H1 (cell line): ENCODE measurements at regions of chrX and their contacts with region 1.

Region 1: DNA sequence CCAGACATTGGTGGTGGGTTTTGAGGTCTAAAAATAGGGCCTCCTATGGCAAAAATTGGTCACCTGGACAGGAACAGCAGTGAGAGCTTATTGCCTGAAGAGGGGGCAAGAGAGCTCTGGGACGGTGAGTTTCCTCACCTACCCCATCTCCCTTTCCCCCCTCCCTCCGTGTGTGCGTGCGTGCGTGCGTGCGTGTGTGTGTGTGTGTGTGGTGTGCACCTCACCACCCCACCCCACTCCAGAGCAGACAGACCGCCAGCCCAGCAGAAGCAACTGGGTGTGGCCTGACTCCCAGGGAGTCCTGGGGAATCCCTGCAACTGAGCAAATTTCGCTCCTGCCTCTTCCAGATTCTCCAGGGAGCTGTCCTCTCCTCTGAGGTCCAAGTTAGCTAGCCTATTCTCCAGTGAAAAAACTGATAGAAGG is 44.7 kb downstream of the PRPS1 start:
- DNase-seq: peak in 1 of 2 experiments; percentile 56
- H3K4me3 ChIP-seq: 0 out of 8 replicates have a peak overlapping the region, but pooled peaks of 1 of the 4 experiments have one; percentile 21
- H3K27ac ChIP-seq: no peak overlapping the region
- H3K4me1 ChIP-seq: peaks cover 0 to 7% (median 1%) of the 10 kb centered on the region in 4 experiments; a peak in 4 of 7 replicates
- H3K27me3 ChIP-seq: no peaks in the 10 kb centered on the region
- CTCF ChIP-seq: peak; percentile 53 to 68 (median 68)
- EP300 ChIP-seq: no peak
- POLR2A ChIP-seq: no peak
- RAD21 ChIP-seq: peak; percentile 72

Region 2: DNA sequence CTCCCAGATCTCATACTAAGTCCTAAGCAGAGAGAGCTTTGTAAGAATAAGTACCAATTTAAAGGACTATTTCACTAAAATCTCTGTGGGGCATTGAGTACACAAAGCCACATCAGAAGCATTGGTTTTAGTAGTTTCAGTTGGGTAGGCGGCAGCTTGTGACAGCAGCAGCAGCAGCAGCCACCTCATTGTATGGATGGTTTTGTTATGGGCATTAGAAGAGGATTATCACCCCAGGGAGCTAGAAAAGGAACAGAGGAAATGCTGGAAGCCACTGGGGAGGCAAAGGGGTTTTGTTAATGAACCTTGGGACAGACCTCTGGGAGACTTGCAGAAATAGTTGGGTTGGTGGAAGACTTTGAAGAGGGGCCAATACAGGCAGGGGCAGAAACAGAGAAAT is 317.4 kb before region 1 on chrX:
- CTCF ChIA-PET with region 1: no interaction called
- POLR2A ChIA-PET with region 1: no interaction called
- DNase-seq: peak in 1 of 2 experiments; percentile 25
- H3K4me3 ChIP-seq: peak overlapping the region in 1 of 4 experiments; percentile 34; a peak in 1 of 8 replicates
- H3K27ac ChIP-seq: no peak overlapping the region
- H3K4me1 ChIP-seq: peaks cover 3 to 11% (median 7%) of the 10 kb centered on the region in 4 experiments; a peak in 4 of 7 replicates
- H3K27me3 ChIP-seq: peaks cover 0 to 9% (median under 1%) of the 10 kb centered on the region in 4 experiments; a peak in 5 of 7 replicates
- CTCF ChIP-seq: no peak
- EP300 ChIP-seq: peak in 1 of 2 experiments; percentile 43; a peak in 1 of 3 replicates
- POLR2A ChIP-seq: no peak
- RAD21 ChIP-seq: no peak

Region 3: DNA sequence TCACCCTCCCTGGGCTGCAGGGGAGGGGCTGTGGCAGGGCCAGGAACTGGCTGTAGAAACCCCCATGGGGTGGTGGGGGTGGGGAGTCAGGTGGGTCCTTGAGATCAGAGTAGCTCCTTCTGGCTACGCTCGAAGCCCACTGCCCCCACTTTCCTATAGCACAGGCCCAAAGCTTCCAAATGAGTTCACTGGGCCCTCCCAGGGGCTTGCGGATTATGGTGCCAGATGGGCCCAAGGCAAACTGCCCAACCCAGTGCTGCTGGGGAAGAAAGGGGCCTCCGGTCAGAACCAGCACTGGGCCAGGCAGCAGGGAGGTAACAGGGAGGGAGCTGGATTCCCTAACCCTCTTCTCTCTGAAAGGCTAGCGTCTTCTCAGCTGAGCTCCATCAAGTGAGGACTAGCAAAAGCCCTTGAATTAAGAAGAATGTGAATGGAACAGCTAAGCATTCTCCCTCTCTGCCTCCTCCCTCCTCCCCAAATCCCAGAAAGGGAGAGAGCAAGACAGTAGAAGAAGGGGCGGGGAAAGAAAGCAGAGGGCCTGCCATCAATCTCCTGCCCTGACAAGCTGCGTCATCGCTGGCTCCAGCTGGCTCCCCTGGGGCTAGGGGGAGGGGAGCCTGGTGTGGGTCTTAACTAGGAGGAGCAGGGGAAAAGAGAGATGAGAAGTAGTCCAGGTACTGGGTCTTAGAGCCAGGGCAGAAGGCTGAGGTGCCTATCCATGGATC is 188.8 kb before region 1 on chrX:
- CTCF ChIA-PET with region 1: no interaction called
- POLR2A ChIA-PET with region 1: no interaction called
- DNase-seq: no peak
- H3K4me3 ChIP-seq: no peak overlapping the region
- H3K27ac ChIP-seq: no peak overlapping the region
- H3K4me1 ChIP-seq: peaks cover 0 to 4% (median under 1%) of the 10 kb centered on the region in 4 experiments; a peak in 1 of 7 replicates
- H3K27me3 ChIP-seq: no peaks in the 10 kb centered on the region
- CTCF ChIP-seq: no peak
- EP300 ChIP-seq: no peak
- POLR2A ChIP-seq: no peak
- RAD21 ChIP-seq: no peak

Region 4: DNA sequence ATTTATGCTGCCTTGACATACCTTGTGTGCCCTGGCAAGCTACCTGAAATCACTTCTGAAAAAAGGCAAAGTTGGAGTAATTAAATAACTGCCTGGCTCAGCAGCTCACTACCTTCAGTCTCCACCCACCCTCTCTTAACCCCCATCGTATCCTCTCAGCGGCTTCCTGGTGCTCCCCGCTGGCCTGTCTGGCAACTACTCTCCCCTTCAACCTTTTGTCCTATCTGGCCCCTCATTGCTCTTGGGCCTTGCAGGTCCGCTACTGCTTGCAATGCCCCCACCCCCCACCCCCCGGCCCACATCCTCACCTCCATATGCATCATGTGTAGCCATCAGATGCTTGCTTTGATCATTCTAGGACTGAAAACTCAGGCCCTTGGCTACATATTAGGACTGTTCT is 10.1 kb before region 1 on chrX:
- CTCF ChIA-PET with region 1: interaction called, 55 read pairs
- POLR2A ChIA-PET with region 1: interaction called, 11 read pairs
- DNase-seq: no peak
- H3K4me3 ChIP-seq: no peak overlapping the region
- H3K27ac ChIP-seq: no peak overlapping the region
- H3K4me1 ChIP-seq: no peaks in the 10 kb centered on the region
- H3K27me3 ChIP-seq: no peaks in the 10 kb centered on the region
- CTCF ChIP-seq: no peak
- EP300 ChIP-seq: no peak
- POLR2A ChIP-seq: no peak
- RAD21 ChIP-seq: no peak

Region 5: DNA sequence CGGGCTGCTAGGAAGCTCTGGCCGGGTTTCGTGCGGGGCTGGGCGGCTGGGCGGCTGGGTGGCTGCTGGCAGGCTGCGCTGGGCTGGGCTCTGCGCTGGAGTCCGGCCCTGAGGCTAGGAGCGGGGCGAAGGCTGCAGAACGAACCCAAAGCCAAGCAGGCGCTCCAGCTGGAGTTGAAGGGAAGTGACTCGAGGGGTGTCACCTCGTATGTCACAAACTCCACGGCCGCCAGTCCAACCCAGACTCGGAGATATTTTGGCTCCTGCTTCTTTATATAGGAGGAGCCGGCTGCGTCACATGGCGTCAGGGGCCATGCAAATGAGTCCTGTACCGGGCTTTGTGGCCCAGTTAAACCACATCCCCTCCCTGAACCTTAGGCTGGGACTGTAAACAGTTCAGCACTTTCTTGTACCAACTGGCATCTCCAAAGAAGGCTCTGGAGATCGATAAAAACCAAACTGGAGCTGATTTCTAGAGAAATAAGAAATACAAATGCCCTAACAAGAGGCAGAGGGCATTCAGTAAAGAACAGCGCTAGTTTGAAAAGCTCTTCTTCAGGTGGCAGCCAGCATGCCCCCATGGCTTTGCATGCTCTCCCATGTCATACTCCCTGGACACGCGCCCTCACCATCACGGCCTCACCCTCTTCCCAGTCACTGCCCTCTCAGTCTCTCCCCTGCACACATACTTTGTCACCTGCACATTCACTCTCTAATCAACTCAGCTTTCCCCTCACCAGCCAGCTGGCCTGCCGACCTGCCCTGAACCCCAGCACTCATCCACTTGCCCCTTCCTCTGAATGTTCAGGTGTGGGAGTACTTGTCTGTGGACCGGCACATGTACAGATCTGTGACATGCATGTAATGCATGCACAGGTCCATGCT is 44.1 kb after region 1 on chrX:
- CTCF ChIA-PET with region 1: interaction called, 325 read pairs
- POLR2A ChIA-PET with region 1: interaction called, 13 read pairs
- DNase-seq: peak in 1 of 2 experiments; percentile 52
- H3K4me3 ChIP-seq: peak overlapping the region; percentile 45 to 73 (median 60)
- H3K27ac ChIP-seq: no peak overlapping the region
- H3K4me1 ChIP-seq: peaks cover 0 to 17% (median 8%) of the 10 kb centered on the region in 4 experiments; a peak in 5 of 7 replicates
- H3K27me3 ChIP-seq: peaks cover 0 to 9% (median 0%) of the 10 kb centered on the region in 4 experiments; a peak in 1 of 7 replicates
- CTCF ChIP-seq: no peak
- EP300 ChIP-seq: no peak
- POLR2A ChIP-seq: peak in 1 of 2 experiments; percentile 74; a peak in 2 of 3 replicates
- RAD21 ChIP-seq: no peak

Region 6: GRCh38 chrX:107741404-107741790 is 68.4 kb after region 1 on chrX:
- CTCF ChIA-PET with region 1: interaction called, 10 read pairs
- POLR2A ChIA-PET with region 1: interaction called, 5 read pairs
- DNase-seq: no peak
- H3K4me3 ChIP-seq: peak overlapping the region in 1 of 4 experiments; percentile 62; a peak in 4 of 8 replicates
- H3K27ac ChIP-seq: no peak overlapping the region; the same call in 1 of the 2 replicates
- H3K4me1 ChIP-seq: peaks cover 2 to 15% (median 7%) of the 10 kb centered on the region in 4 experiments; a peak in 6 of 7 replicates
- H3K27me3 ChIP-seq: peaks cover 0 to 1% (median 0%) of the 10 kb centered on the region in 4 experiments; a peak in 2 of 7 replicates
- CTCF ChIP-seq: no peak
- EP300 ChIP-seq: no peak
- POLR2A ChIP-seq: no peak
- RAD21 ChIP-seq: no peak

Region 7: DNA sequence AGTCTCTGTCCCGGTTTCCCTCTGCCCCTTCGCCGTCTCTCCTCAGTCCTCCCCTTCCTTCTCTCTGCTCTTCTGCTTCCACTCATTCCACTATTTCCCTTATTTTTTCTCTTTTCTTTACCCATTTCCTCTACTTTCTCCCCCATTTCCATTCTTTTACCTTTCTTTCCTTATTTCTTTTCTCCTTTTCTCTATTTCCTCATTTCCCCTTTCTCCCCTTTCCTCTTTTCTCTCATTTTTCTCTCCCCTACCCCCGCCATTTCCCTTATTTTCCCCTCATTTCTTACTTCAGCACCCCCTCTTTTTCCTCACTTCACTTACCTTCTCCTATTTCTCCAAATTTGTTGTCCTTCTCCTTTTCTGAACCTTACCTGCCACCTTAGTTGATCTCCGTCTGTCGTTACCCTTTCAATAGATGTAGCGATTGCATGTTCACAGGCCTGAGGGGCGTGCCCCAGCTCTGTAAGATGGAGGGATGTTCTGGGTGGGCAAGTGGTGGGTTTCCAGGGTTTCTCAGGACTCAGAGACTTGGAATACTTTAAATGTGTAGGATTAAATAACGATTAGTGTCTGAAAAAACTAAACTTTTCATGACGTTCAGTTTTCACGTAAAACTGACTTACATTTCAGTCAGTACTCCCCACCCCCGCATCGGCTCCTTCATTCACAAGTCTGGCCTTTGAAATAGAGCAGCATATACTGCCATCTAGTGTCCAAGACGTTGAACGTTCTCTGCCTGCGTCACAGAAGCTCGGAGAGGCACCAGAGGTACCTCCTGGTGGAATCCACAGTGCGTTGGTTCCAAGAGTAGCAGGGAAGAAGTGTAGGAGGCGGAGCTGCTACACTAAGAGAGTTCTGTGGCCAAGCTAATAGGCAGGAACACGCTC is 103.9 kb after region 1 on chrX:
- CTCF ChIA-PET with region 1: interaction called, 209 read pairs
- POLR2A ChIA-PET with region 1: interaction called, 3 read pairs
- DNase-seq: peak; percentile 53 to 55
- H3K4me3 ChIP-seq: peak overlapping the region; percentile 26 to 62 (median 41); a peak in 5 of 8 replicates
- H3K27ac ChIP-seq: no peak overlapping the region
- H3K4me1 ChIP-seq: peaks cover 0 to 10% (median 6%) of the 10 kb centered on the region in 4 experiments
- H3K27me3 ChIP-seq: peaks cover 20 to 39% (median 32%) of the 10 kb centered on the region in 4 experiments
- CTCF ChIP-seq: peak; percentile 42 to 74 (median 67)
- EP300 ChIP-seq: no peak
- POLR2A ChIP-seq: no peak
- RAD21 ChIP-seq: peak; percentile 82 to 90

Region 8: GRCh38 chrX:108122748-108123147 is 449.8 kb after region 1 on chrX:
- CTCF ChIA-PET with region 1: no interaction called
- POLR2A ChIA-PET with region 1: no interaction called
- DNase-seq: no peak
- H3K4me3 ChIP-seq: no peak overlapping the region
- H3K27ac ChIP-seq: no peak overlapping the region
- H3K4me1 ChIP-seq: peaks cover 0 to 3% (median 0%) of the 10 kb centered on the region in 4 experiments; a peak in 1 of 7 replicates
- H3K27me3 ChIP-seq: no peaks in the 10 kb centered on the region
- CTCF ChIP-seq: no peak
- EP300 ChIP-seq: no peak
- POLR2A ChIP-seq: no peak
- RAD21 ChIP-seq: no peak